ENCODE measurements at regions of chr9 and their contacts with region 1.

Region 1: GRCh38 chr9:125706661-125707471 is at the start of gene MAPKAP1:
- DNase-seq: peak; percentile 95 to 99 (median 97)
- H3K4me3 ChIP-seq: peak within 1 kb of the TSS; percentile 57 to 88 (median 64)
- H3K4me3 Mint-ChIP-seq: peak within 1 kb of the TSS; percentile 82 to 87
- H3K27ac ChIP-seq: peak within 1 kb of the TSS; percentile 23 to 89
- H3K27ac Mint-ChIP-seq: peak within 1 kb of the TSS; percentile 57 to 93 (median 89)
- H3K4me1 ChIP-seq: peaks cover 15 to 20% of the 10 kb centered on the region in 2 donors
- H3K4me1 Mint-ChIP-seq: peaks cover 31% of the 10 kb centered on the region
- H3K27me3 ChIP-seq: no peaks in the 10 kb centered on the region
- H3K27me3 Mint-ChIP-seq: peaks cover 0 to 2% (median 0%) of the 10 kb centered on the region in 3 donors
- CTCF ChIP-seq: no peak
- polyA plus RNA-seq, gene MAPKAP1: 39.9 to 57.5 (median 44.1) TPM

Region 2: DNA sequence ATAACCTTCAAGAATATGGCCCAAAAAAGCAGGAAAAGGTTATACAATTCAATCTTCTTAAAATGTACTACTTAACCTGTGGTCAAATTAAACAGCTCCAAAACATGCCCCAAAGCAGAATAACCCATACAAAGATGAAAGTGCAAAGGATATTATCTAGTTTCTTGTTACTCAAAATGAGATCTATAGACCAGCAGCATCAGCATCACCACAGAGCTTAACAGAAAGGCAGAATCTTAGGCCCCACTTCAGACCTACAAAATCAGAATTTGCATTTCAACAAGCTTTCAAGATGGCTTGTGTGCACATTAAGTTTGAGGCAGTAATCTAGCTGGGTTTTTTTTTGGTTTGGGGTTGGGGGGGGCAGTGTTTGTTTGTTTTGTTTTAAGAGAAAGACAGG is 617.5 kb before region 1 on chr9:
- intact Hi-C with region 1: no loop called
- DNase-seq: no peak
- H3K4me3 ChIP-seq: no peak overlapping the region
- H3K4me3 Mint-ChIP-seq: no peak overlapping the region
- H3K27ac ChIP-seq: no peak overlapping the region
- H3K27ac Mint-ChIP-seq: no peak overlapping the region
- H3K4me1 ChIP-seq: no peaks in the 10 kb centered on the region
- H3K4me1 Mint-ChIP-seq: peaks cover 17% of the 10 kb centered on the region
- H3K27me3 ChIP-seq: no peaks in the 10 kb centered on the region
- H3K27me3 Mint-ChIP-seq: peaks cover 0 to 2% (median 1%) of the 10 kb centered on the region in 3 donors
- CTCF ChIP-seq: no peak

Region 3: GRCh38 chr9:125631391-125632085 is 75.3 kb before region 1 on chr9:
- intact Hi-C with region 1: loop called in 1 of 2 experiments (anchors 5 kb)
- DNase-seq: peak; percentile 38 to 65 (median 58)
- H3K4me3 ChIP-seq: peak overlapping the region in 1 of 3 experiments; percentile 16
- H3K4me3 Mint-ChIP-seq: peak overlapping the region; percentile 32 to 75
- H3K27ac ChIP-seq: peak overlapping the region; percentile 81 to 98
- H3K27ac Mint-ChIP-seq: peak overlapping the region; percentile 93 to 99 (median 98)
- H3K4me1 ChIP-seq: peaks cover 65 to 78% of the 10 kb centered on the region in 2 donors
- H3K4me1 Mint-ChIP-seq: peaks cover 80% of the 10 kb centered on the region
- H3K27me3 ChIP-seq: no peaks in the 10 kb centered on the region
- H3K27me3 Mint-ChIP-seq: peaks cover 0 to 2% (median 0%) of the 10 kb centered on the region in 3 donors
- CTCF ChIP-seq: peak; percentile 80

Region 4: GRCh38 chr9:125650271-125650737 is 56.6 kb before region 1 on chr9:
- intact Hi-C with region 1: loop called (anchors 5 to 10 kb)
- DNase-seq: peak; percentile 90 to 96 (median 94)
- H3K4me3 ChIP-seq: peak overlapping the region; percentile 2 to 38 (median 29)
- H3K4me3 Mint-ChIP-seq: peak overlapping the region; percentile 68 to 93
- H3K27ac ChIP-seq: peak overlapping the region; percentile 81 to 100
- H3K27ac Mint-ChIP-seq: peak overlapping the region; percentile 98 to 100 (median 100)
- H3K4me1 ChIP-seq: peaks cover 67 to 76% of the 10 kb centered on the region in 2 donors
- H3K4me1 Mint-ChIP-seq: peaks cover 74% of the 10 kb centered on the region
- H3K27me3 ChIP-seq: no peaks in the 10 kb centered on the region
- H3K27me3 Mint-ChIP-seq: peaks cover 0 to 2% (median 0%) of the 10 kb centered on the region in 3 donors
- CTCF ChIP-seq: no peak

Region 5: GRCh38 chr9:125785248-125785751 is 78.4 kb after region 1 on chr9:
- intact Hi-C with region 1: no loop called
- DNase-seq: peak; percentile 25 to 49 (median 27)
- H3K4me3 ChIP-seq: no peak overlapping the region
- H3K4me3 Mint-ChIP-seq: no peak overlapping the region
- H3K27ac ChIP-seq: peak overlapping the region in 1 of 2 donors; percentile 37
- H3K27ac Mint-ChIP-seq: peak overlapping the region; percentile 15 to 83 (median 41)
- H3K4me1 ChIP-seq: peaks cover 9% of the 10 kb centered on the region in 2 donors
- H3K4me1 Mint-ChIP-seq: peaks cover 20% of the 10 kb centered on the region
- H3K27me3 ChIP-seq: no peaks in the 10 kb centered on the region
- H3K27me3 Mint-ChIP-seq: no peaks in the 10 kb centered on the region
- CTCF ChIP-seq: no peak

Measured in CD14-positive monocyte (primary cell).